Heart right ventricle (tissue), 16 donors: ENCODE measurements at regions of chr12 and their contacts with region 1.

Region 1: GRCh38 chr12:111451649-111452129 is 46.0 kb downstream of the SH2B3 start:
- DNase-seq: no peak
- ATAC-seq: peak in 4 of 8 donors; percentile 2 to 22 (median 10)
- H3K4me3 ChIP-seq: no peak overlapping the region
- H3K27ac ChIP-seq: peak overlapping the region in 6 of 10 donors; percentile 15 to 93 (median 84)
- H3K4me1 ChIP-seq: peaks cover 13 to 84% (median 63%) of the 10 kb centered on the region in 9 donors
- H3K27me3 ChIP-seq: no peaks in the 10 kb centered on the region
- CTCF ChIP-seq: peak; percentile 64 to 86 (median 79)

Region 2: DNA sequence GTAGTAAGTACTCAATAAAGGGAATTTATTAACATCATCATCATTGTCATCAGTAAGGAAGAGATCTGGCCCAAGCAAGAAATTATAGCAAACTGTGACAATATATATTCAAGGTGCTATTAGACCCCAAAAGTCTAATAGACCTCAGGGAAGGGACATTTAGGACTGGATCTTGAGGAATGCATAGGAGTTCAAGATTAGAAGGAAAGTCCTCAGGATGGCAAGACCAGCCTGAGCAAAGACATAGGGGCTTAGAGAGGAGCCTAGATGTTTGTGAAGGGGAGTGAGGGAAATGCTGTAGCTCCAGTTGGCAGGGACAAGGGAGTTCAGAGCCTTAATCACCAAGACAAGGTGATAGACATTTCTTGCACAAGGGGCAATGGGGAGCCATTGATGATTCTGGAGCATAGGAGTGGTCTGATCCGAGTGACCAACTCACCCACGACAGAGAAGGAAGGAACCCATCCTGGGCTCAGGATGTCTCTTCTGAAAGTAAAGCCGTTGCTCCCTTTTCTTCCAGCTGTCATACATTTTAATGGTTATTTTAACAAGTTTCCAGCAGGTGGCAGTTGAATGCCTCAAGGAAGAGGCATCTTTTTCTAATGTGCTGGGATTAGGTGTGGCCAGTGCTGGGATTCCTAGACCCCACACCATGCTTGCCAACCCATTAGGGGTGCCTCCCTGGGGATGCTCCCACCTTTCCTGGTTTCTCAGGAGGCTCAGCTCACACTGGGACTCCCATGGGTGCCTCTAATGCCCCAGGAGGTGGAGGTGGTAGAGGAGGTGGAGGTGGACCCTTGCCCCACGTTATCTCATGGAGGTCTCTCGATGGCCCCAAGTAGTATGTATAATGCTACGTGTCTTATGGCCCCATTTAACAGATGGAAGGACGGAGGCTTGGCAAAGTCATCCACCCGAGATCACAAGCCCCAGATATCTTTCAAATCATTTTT is 120.6 kb before region 1 on chr12:
- intact Hi-C with region 1: loop called in 1 of 10 experiments (anchors 5 kb)
- DNase-seq: no peak
- ATAC-seq: peak in 4 of 8 donors; percentile 17 to 50 (median 36)
- H3K4me3 ChIP-seq: no peak overlapping the region
- H3K27ac ChIP-seq: no peak overlapping the region
- H3K4me1 ChIP-seq: no peaks in the 10 kb centered on the region
- H3K27me3 ChIP-seq: peaks cover 0 to 11% (median 0%) of the 10 kb centered on the region in 7 donors
- CTCF ChIP-seq: peak; percentile 20 to 59 (median 49)

Region 3: DNA sequence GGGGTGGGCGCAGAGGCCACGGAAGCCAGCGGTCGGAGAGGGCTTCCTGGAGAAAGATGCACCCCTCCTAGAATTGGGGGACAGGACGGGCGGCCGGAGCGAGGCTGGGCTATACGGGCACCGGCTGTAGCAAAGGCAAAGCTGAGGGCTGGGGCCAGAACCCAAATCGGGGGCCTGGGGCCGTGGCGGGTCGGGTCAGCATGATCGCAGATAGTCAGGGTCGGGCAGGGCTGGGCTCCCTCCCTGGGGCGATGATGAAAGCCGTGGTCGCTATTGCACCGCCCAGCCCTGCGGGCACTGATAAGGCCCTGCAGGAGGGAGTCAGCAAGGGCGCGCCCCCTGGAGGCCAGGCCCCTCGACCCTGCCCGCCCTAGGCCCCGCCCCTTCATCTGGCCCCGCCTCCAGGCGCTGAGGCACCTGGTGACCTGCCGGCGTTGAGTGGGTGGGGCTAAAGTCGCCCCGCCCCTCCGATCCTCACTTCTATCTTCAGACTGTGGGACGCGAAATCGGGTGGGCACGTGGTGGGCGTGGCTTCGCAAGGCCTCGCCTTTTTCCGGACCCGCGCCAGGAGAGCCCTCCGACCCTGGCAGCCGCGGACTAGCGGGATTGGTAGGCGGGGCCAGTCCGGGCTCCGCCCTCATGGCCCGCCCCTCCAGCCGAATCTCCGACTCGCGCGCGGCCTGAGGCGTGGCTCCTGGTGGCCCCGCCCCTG is 46.4 kb before region 1 on chr12:
- intact Hi-C with region 1: loop called in 6 of 10 experiments (anchors 2 to 5 kb)
- DNase-seq: peak; percentile 93 to 95
- ATAC-seq: peak; percentile 80 to 90 (median 85)
- H3K4me3 ChIP-seq: peak overlapping the region; percentile 9 to 97 (median 88)
- H3K27ac ChIP-seq: peak overlapping the region; percentile 79 to 100 (median 98)
- H3K4me1 ChIP-seq: peaks cover 33 to 74% (median 67%) of the 10 kb centered on the region in 9 donors
- H3K27me3 ChIP-seq: no peaks in the 10 kb centered on the region
- CTCF ChIP-seq: peak in 8 of 9 donors; percentile 62 to 83 (median 79)

Region 4: DNA sequence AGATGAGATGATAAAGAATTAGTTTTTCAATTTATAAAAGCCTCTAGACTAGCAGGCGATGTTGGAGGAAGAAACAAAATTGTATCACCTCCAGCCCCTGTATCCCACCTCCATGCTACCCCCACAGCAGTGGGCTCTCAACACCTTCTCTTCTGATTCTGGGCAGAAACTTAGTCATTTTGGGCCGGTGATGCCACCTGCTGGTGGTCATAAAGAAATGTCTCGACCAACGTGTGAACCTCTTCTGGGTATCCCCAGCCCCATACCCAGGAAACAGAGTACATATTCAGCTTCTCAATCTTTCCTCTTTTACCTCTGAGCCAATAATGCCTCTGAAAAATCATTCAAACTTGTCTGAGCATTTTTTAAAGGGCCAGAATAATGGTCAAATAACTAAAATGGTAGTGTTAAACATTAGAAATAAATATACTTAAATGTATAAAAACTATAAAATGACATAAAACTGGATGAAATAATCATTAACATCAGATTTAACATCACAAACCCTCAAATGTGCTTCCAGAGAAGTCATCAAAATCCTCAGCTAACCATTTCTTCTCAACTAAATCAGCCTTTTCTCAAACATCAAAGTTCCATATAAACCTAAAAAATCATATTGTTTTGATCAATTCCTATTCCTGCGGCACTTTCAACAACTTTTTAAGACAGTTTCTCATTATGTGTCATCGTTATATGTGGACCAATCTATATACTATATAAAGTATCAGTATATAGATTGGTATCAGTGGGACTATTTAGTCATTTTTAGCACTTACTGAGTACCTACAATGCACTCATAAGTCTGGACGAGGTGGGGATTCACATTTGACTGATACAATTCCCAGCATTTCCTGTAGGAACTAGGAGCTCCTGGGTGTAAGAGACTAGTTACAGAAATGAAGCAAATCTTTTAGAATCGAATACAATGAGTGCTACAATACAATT is 78.0 kb after region 1 on chr12:
- intact Hi-C with region 1: loop called in 1 of 10 experiments (anchors 10 kb)
- DNase-seq: peak; percentile 23 to 27
- ATAC-seq: peak in 2 of 8 donors; percentile 47 to 53
- H3K4me3 ChIP-seq: no peak overlapping the region
- H3K27ac ChIP-seq: no peak overlapping the region
- H3K4me1 ChIP-seq: peaks cover 0 to 6% (median 0%) of the 10 kb centered on the region in 9 donors
- H3K27me3 ChIP-seq: no peaks in the 10 kb centered on the region
- CTCF ChIP-seq: peak; percentile 42 to 79 (median 73)